Gastrocnemius medialis (tissue), 4 donors: ENCODE measurements at regions of chr4 and their contacts with region 1.

Region 1: DNA sequence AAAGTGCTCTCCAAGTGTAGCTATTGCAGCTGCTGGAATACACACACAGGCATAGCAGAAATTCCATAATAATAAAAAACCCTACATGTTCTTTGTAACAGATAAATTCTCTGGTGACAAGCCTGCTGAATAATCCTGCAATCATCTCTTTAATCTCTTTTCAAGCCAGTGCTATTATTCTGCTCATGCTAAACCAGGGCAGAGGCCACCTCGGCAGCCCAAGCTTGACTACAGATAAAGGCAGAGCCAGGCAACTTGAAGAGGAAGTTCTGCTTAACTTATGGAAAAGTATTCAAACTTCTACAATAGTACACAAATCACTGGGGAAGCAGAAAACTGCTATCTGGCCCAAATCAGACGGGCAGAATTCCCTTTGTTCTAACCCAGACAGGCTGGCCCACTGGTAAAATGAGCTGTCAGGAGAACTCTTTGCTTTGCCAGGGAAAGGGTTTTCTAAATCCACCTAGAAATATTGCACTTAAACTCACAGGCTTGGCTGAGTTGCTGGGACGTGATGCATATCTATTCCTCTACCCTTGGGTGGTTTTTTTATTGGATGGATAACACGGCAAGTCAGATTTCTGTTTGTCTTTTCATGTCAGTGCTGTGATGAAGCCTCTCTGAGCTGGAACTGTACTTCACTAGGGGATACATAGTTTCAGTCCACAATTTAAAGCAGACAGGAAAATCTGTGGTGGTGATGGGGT is 70.5 kb downstream of the GATB start:
- DNase-seq: no peak
- ATAC-seq: no peak
- H3K4me3 ChIP-seq: no peak overlapping the region
- H3K27ac ChIP-seq: peak overlapping the region; percentile 83 to 92 (median 91)
- H3K4me1 ChIP-seq: peaks cover 87 to 89% of the 10 kb centered on the region in 2 donors
- H3K27me3 ChIP-seq: no peaks in the 10 kb centered on the region
- CTCF ChIP-seq: no peak
- POLR2A ChIP-seq: no peak

Region 2: GRCh38 chr4:151408630-151409469 is 281.5 kb before region 1 on chr4 and contains the start of gene FHIP1A:
- in situ Hi-C with region 1: no loop called
- intact Hi-C with region 1: loop called (anchors 5 kb)
- DNase-seq: peak; percentile 88 to 95
- ATAC-seq: peak; percentile 71 to 82
- H3K4me3 ChIP-seq: peak within 1 kb of the TSS; percentile 73 to 83 (median 80)
- H3K27ac ChIP-seq: peak within 1 kb of the TSS; percentile 94 to 99 (median 98)
- H3K4me1 ChIP-seq: peaks cover 26 to 45% of the 10 kb centered on the region in 2 donors
- H3K27me3 ChIP-seq: no peaks in the 10 kb centered on the region
- CTCF ChIP-seq: peak in 3 of 5 experiments; percentile 6 to 32 (median 31)
- POLR2A ChIP-seq: peak; percentile 68 to 80
- total RNA-seq, gene FHIP1A: 34.7 to 143 (median 78.3) TPM

Region 3: DNA sequence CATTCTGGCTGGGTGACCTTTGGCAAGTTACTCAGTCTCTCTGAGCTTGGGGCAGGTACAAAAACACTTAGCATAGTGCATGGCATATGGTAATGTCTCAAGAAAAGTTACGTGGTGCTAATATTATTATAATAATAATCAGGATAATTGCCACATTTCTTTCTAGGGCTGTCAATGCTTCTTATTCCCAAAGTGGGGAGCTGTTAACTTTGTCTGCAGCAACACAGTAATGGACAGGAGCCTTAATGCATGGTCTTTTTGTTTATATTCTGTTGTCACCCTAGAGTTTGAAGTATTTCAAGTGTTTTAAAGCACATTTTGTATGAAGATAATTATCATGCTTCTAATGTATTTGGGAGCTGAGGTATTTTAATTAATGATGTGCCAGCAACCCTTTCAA is 159.5 kb before region 1 on chr4:
- in situ Hi-C with region 1: no loop called
- intact Hi-C with region 1: loop called (anchors 2 kb)
- DNase-seq: no peak
- ATAC-seq: no peak
- H3K4me3 ChIP-seq: no peak overlapping the region
- H3K27ac ChIP-seq: peak overlapping the region; percentile 74 to 84 (median 80)
- H3K4me1 ChIP-seq: peaks cover 49 to 52% of the 10 kb centered on the region in 2 donors
- H3K27me3 ChIP-seq: no peaks in the 10 kb centered on the region
- CTCF ChIP-seq: peak in 1 of 5 experiments; percentile 27
- POLR2A ChIP-seq: no peak

Region 4: GRCh38 chr4:151644622-151645021 is 45.7 kb before region 1 on chr4:
- in situ Hi-C with region 1: no loop called
- intact Hi-C with region 1: loop called (anchors 1 kb)
- DNase-seq: no peak
- ATAC-seq: no peak
- H3K4me3 ChIP-seq: no peak overlapping the region
- H3K27ac ChIP-seq: no peak overlapping the region
- H3K4me1 ChIP-seq: peaks cover 19 to 20% of the 10 kb centered on the region in 2 donors
- H3K27me3 ChIP-seq: no peaks in the 10 kb centered on the region
- CTCF ChIP-seq: peak; percentile 13 to 51 (median 34)
- POLR2A ChIP-seq: no peak

Region 5: GRCh38 chr4:151674804-151675391 is 15.4 kb before region 1 on chr4:
- in situ Hi-C with region 1: no loop called
- intact Hi-C with region 1: loop called (anchors 2 kb)
- DNase-seq: no peak
- ATAC-seq: no peak
- H3K4me3 ChIP-seq: peak overlapping the region; percentile 17 to 40 (median 26)
- H3K27ac ChIP-seq: peak overlapping the region in 3 of 4 donors; percentile 19 to 95 (median 35)
- H3K4me1 ChIP-seq: peaks cover 27 to 29% of the 10 kb centered on the region in 2 donors
- H3K27me3 ChIP-seq: no peaks in the 10 kb centered on the region
- CTCF ChIP-seq: no peak
- POLR2A ChIP-seq: no peak

Region 6: DNA sequence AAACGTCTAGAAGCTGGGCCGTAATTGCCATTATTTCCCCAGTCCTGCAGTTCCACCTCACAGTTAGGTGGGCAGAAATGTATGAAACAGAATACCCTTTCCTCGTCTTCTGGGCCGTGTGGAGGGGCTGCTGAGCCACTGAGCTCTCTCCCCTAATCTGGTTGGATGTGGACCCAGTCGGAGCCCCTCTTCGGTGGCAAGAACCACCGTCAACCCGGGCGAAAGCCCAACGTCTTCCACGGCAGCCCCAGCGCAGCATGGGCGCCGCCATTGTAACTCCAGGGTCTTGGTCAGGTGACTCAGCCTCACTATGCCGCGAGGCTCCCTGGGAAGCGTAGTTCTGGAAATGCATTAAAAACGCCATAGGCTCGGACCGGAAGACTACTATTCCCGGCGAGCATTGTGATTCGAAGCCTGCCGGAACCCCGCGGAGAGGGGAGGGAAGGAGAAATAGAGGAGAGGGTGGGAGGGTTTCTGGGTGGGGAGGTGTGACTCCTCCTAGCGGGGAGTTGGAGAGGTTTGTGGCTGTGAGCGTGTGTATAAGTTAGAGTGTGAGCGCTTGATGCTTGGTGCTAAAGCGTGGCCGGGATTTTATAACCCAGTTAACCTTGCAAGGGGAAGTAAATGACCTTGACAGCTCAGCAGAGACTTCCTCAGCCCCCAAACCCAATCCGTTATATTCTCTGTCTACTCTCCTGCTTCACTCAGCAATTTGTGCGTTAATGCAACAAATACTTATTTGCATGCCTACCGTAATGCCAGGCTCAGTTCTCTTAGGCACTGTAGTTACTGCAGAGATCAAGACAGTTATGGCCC is 70.6 kb after region 1 on chr4 and contains the start of gene GATB:
- in situ Hi-C with region 1: no loop called
- intact Hi-C with region 1: loop called (anchors 5 kb)
- DNase-seq: peak; percentile 91 to 92
- ATAC-seq: peak; percentile 100
- H3K4me3 ChIP-seq: peak within 1 kb of the TSS; percentile 83 to 95 (median 92)
- H3K27ac ChIP-seq: peak within 1 kb of the TSS; percentile 72 to 88 (median 81)
- H3K4me1 ChIP-seq: peaks cover 7 to 11% of the 10 kb centered on the region in 2 donors
- H3K27me3 ChIP-seq: no peaks in the 10 kb centered on the region
- CTCF ChIP-seq: peak in 3 of 5 experiments; percentile 38 to 63 (median 52)
- POLR2A ChIP-seq: peak; percentile 48 to 55
- total RNA-seq, gene GATB: 18.7 to 34.0 (median 27.6) TPM

Region 7: DNA sequence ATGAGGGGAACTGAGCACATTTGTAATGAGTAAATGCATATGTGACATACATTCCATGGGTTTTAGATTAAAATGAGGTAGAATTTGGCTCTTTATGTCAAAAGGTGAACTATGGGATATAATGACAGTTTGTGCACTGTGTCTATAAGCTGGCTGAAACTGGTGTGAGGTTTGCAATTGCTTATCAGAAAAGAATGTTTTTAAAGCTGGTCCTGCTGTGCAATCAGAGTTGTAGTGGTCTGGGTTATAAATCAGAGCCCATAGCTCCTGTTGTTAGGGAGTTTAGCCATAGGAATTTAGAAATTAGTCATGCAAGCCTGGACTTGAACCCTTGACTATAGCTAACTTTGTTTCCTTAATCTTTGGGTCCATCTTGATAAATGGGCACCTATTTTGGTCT is 93.5 kb after region 1 on chr4:
- in situ Hi-C with region 1: no loop called
- intact Hi-C with region 1: no loop called
- DNase-seq: no peak
- ATAC-seq: no peak
- H3K4me3 ChIP-seq: no peak overlapping the region
- H3K27ac ChIP-seq: no peak overlapping the region
- H3K4me1 ChIP-seq: no peaks in the 10 kb centered on the region
- H3K27me3 ChIP-seq: no peaks in the 10 kb centered on the region
- CTCF ChIP-seq: no peak
- POLR2A ChIP-seq: no peak

Region 8: DNA sequence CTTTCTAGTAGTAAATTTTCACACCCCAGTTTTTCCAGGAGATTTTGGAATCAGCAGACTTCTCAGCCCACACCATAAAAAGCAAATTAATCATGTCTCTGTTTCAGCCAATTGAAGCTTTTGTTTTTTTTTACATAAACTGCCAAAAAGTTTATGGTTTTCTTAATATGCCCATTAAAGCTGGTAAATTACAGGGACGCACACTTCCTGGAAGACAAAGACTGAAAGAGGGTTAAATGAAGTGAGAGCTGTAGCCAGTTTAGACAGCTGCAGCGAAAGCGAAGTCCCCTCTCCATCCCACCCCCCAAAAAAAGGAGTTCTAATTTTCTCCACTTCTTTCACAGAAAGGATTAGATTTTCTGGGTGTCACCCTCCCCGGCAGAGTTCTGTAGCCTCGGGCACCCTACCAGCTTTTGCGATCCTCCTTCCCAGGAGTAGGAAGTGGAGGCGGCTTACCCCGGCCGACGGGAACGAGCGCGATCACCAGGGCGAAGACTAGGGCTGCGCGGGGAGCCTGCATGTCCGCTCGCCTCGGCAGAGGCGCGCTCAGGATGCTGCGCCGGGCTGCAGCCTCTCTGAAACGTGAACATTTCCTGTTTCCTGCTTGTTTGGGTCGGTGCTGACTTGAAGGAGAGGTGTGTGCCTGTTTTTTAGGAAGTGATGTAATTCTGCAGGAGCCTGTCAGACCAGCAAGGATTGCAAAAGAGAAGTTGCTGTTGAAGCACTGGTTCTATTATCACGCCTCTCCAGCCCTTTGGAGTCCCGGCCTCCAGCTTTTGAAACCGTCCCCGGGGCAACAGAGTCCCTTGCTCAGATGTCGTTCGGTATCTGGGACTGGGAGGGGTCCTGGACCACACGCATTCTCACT is 989.3 kb after region 1 on chr4 and contains the start of gene TMEM154:
- in situ Hi-C with region 1: no loop called
- intact Hi-C with region 1: no loop called
- DNase-seq: peak in 1 of 2 donors; percentile 27
- ATAC-seq: peak; percentile 58 to 77
- H3K4me3 ChIP-seq: peak within 1 kb of the TSS; percentile 46 to 62 (median 54)
- H3K27ac ChIP-seq: peak within 1 kb of the TSS in 1 of 4 donors; percentile 44
- H3K4me1 ChIP-seq: peaks cover 0 to 11% of the 10 kb centered on the region in 2 donors
- H3K27me3 ChIP-seq: no peaks in the 10 kb centered on the region
- CTCF ChIP-seq: no peak
- POLR2A ChIP-seq: no peak
- total RNA-seq, gene TMEM154: 0.15 to 2.0 (median 0.70) TPM